Left ventricle myocardium inferior (tissue), 1 donor: ENCODE measurements at regions of chr15 and their contacts with region 1.

Region 1: GRCh38 chr15:25933456-25934158 is 70.5 kb upstream of the ATP10A start:
- DNase-seq: peak; percentile 69
- H3K4me3 ChIP-seq: peak overlapping the region; percentile 43
- H3K27ac ChIP-seq: no peak overlapping the region
- H3K4me1 ChIP-seq: peaks cover 10% of the 10 kb centered on the region
- H3K27me3 ChIP-seq: peaks cover 24% of the 10 kb centered on the region
- CTCF ChIP-seq: peak; percentile 77

Region 2: DNA sequence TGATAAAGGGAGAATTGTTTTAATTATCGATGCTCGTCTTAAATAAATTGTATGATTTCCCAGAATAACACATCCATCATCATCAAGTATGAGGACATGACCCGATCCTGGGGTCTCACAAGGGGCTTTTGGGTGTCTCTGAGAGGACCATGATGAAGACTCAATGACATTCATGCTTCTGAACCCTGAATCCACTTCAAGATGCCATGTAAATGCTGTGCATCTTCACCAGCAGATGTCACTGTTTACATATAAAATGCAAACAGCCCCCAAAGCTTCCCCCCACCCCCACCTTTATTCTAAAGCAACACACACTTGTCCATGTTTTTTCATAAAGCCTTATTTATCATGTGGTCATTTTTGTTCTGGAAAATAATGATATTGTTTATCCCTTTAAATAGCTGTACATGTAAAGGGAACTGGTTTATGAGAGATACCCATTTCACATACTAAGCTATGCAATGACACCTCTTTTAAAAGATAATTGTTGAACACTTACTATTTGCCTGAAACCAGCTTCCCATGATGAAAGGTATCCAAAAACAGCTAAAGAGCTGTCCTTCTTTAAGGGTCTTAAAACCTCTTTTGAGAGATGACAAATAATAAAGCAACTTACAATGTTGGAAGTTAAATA is 425.1 kb before region 1 on chr15:
- intact Hi-C with region 1: loop called (anchors 10 kb)
- DNase-seq: no peak
- H3K4me3 ChIP-seq: no peak overlapping the region
- H3K27ac ChIP-seq: no peak overlapping the region
- H3K4me1 ChIP-seq: no peaks in the 10 kb centered on the region
- H3K27me3 ChIP-seq: no peaks in the 10 kb centered on the region
- CTCF ChIP-seq: peak; percentile 72

Region 3: GRCh38 chr15:25693321-25694237 is 240.0 kb before region 1 on chr15:
- intact Hi-C with region 1: loop called (anchors 10 kb)
- DNase-seq: peak; percentile 36
- H3K4me3 ChIP-seq: no peak overlapping the region
- H3K27ac ChIP-seq: no peak overlapping the region
- H3K4me1 ChIP-seq: peaks cover 13% of the 10 kb centered on the region
- H3K27me3 ChIP-seq: peaks cover 13% of the 10 kb centered on the region
- CTCF ChIP-seq: peak; percentile 74

Region 4: GRCh38 chr15:26073430-26074333 is 140.1 kb after region 1 on chr15:
- intact Hi-C with region 1: no loop called
- DNase-seq: no peak
- H3K4me3 ChIP-seq: no peak overlapping the region
- H3K27ac ChIP-seq: no peak overlapping the region
- H3K4me1 ChIP-seq: no peaks in the 10 kb centered on the region
- H3K27me3 ChIP-seq: peaks cover 44% of the 10 kb centered on the region
- CTCF ChIP-seq: no peak

Region 5: GRCh38 chr15:26242565-26243071 is 309.0 kb after region 1 on chr15:
- intact Hi-C with region 1: no loop called
- DNase-seq: no peak
- H3K4me3 ChIP-seq: no peak overlapping the region
- H3K27ac ChIP-seq: no peak overlapping the region
- H3K4me1 ChIP-seq: no peaks in the 10 kb centered on the region
- H3K27me3 ChIP-seq: no peaks in the 10 kb centered on the region
- CTCF ChIP-seq: no peak